ENCODE measurements at regions of chr7 and their contacts with region 1.

Region 1: DNA sequence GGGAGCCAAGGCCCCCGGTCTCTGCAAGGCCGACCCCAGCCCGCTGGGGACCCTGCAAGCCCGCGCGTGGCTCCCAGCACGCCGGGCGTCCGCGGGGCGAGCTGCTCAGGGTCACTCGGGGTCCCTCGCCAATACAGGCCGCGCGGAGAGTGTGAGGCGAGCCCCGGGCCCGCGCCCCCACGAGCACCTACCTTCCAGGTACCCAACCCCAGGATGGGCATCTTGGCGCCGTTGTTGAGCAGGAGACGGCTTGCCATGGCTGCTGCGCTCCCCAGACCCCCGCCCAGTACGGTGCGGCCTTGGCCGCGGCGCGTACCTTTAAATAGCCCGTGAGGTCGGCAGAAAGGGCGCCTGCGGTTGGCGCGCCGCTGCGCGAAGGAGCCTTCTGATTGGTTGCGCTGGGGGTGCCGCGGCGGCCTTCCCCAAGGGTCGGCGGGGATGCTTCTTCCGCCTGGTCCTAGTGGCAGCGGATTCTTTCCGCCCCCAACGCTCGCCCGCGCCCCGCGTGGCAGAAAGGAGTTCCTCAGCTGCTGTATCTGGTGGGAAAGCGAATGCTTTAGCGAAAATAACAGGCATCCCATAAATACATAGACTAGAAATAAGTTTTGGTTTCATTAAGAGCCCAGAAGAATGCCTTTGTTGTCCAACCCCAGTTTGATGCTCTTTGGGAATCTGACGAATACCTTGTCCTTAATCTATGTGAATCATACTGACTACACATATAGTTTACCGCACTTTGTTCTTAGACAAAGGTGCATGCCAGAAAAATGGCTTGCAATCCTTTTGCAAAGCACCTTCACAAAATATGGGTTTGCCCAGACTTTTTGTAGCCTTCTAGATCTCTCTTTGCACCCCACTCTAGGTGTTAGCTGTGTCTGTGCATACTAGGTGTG is at the start of gene AKR1B1:
- DNase-seq: peak; percentile 87
- H3K4me3 Mint-ChIP-seq: peak within 1 kb of the TSS; percentile 90
- H3K27ac Mint-ChIP-seq: peak within 1 kb of the TSS; percentile 81
- H3K4me1 Mint-ChIP-seq: peaks cover 44% of the 10 kb centered on the region
- H3K27me3 Mint-ChIP-seq: no peaks in the 10 kb centered on the region
- total RNA-seq, gene AKR1B1: 99.7 and 111 TPM in 2 replicates

Region 2: DNA sequence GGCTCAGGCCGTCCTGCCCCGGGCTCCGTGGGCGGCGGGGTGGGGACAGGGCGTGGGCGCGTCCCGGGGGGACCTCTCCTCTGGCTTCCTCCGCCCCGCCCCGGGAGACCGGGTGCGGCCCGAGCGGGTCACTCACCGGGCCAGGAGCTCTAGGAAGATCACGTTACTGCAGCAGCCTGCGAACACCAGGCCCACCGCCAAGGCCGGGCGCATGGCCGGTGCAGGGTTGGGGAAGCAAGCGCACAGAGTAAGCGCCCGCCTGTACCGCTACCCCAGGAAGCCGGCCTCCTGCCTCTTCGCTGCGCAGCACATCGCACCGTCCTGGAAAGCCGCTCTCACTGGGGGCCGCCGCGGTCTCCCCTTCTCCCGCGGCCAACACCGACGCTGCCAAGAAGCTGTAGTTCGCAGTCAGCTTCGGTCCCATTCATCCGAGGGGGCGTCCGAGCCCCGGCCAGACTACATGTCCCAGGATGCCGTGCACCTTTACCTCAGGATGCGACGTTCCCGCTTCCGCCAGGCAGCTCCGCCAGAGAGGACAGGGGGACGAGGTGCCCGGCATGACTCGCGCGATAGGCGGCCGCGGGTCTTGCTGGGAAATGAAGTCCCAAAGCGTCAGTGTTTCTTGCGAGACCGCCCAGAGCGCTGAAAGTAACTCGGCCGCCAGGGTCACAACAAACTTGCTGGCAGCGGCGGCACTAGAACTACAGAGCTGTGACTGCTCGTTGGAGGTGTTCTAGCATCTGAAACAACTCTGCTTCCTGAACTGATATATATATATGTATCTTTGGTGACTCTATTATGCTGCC is 142.3 kb before region 1 on chr7 and contains the start of gene SLC35B4:
- intact Hi-C with region 1: loop called (anchors 1 kb)
- DNase-seq: peak; percentile 91
- H3K4me3 Mint-ChIP-seq: peak within 1 kb of the TSS; percentile 93
- H3K27ac Mint-ChIP-seq: peak within 1 kb of the TSS; percentile 89
- H3K4me1 Mint-ChIP-seq: peaks cover 17% of the 10 kb centered on the region
- H3K27me3 Mint-ChIP-seq: no peaks in the 10 kb centered on the region
- total RNA-seq, gene SLC35B4: 22.4 and 23.3 TPM in 2 replicates

Region 3: GRCh38 chr7:134514663-134515062 is 55.6 kb after region 1 on chr7:
- intact Hi-C with region 1: loop called (anchors 1 kb)
- DNase-seq: no peak
- H3K4me3 Mint-ChIP-seq: no peak overlapping the region
- H3K27ac Mint-ChIP-seq: no peak overlapping the region
- H3K4me1 Mint-ChIP-seq: peaks cover 16% of the 10 kb centered on the region
- H3K27me3 Mint-ChIP-seq: peaks cover 12% of the 10 kb centered on the region

Region 4: GRCh38 chr7:134986363-134987251 is 527.6 kb after region 1 on chr7 and contains the start of gene AGBL3:
- intact Hi-C with region 1: loop called (anchors 1 kb)
- DNase-seq: peak; percentile 87
- H3K4me3 Mint-ChIP-seq: peak within 1 kb of the TSS; percentile 97
- H3K27ac Mint-ChIP-seq: peak within 1 kb of the TSS; percentile 86
- H3K4me1 Mint-ChIP-seq: peaks cover 49% of the 10 kb centered on the region
- H3K27me3 Mint-ChIP-seq: no peaks in the 10 kb centered on the region
- total RNA-seq, gene AGBL3: 1.5 and 1.9 TPM in 2 replicates

Region 5: GRCh38 chr7:135211179-135211945 is 752.3 kb after region 1 on chr7 and contains the start of gene WDR91:
- intact Hi-C with region 1: loop called (anchors 5 kb)
- DNase-seq: peak; percentile 86
- H3K4me3 Mint-ChIP-seq: peak within 1 kb of the TSS; percentile 96
- H3K27ac Mint-ChIP-seq: peak within 1 kb of the TSS; percentile 98
- H3K4me1 Mint-ChIP-seq: peaks cover 47% of the 10 kb centered on the region
- H3K27me3 Mint-ChIP-seq: no peaks in the 10 kb centered on the region
- total RNA-seq, gene WDR91: 34.6 and 35.4 TPM in 2 replicates

Region 6: GRCh38 chr7:135977007-135977741 is 1518.1 kb after region 1 on chr7 and contains the start of gene MTPN:
- intact Hi-C with region 1: loop called (anchors 10 kb)
- DNase-seq: peak; percentile 98
- H3K4me3 Mint-ChIP-seq: peak within 1 kb of the TSS; percentile 98
- H3K27ac Mint-ChIP-seq: peak within 1 kb of the TSS; percentile 88
- H3K4me1 Mint-ChIP-seq: peaks cover 75% of the 10 kb centered on the region
- H3K27me3 Mint-ChIP-seq: peaks cover 2% of the 10 kb centered on the region
- total RNA-seq, gene MTPN: 117 and 119 TPM in 2 replicates